GM12878 (cell line): ENCODE measurements at regions of chr1 and their contacts with region 1.

Region 1: GRCh38 chr1:180515864-180516388 is 13.5 kb upstream of the ACBD6 start:
- DNase-seq: peak; percentile 49
- ATAC-seq: peak; percentile 99
- H3K4me3 ChIP-seq: no peak overlapping the region
- H3K27ac ChIP-seq: peak overlapping the region; percentile 40; the same call in 1 of the 2 replicates
- H3K4me1 ChIP-seq: peaks cover 3% of the 10 kb centered on the region; the same call in 1 of the 2 replicates
- H3K27me3 ChIP-seq: no peaks in the 10 kb centered on the region
- CTCF ChIP-seq: peak; percentile 72 to 88 (median 76)
- EP300 ChIP-seq: no peak
- POLR2A ChIP-seq: no peak
- RAD21 ChIP-seq: peak; percentile 92

Region 2: DNA sequence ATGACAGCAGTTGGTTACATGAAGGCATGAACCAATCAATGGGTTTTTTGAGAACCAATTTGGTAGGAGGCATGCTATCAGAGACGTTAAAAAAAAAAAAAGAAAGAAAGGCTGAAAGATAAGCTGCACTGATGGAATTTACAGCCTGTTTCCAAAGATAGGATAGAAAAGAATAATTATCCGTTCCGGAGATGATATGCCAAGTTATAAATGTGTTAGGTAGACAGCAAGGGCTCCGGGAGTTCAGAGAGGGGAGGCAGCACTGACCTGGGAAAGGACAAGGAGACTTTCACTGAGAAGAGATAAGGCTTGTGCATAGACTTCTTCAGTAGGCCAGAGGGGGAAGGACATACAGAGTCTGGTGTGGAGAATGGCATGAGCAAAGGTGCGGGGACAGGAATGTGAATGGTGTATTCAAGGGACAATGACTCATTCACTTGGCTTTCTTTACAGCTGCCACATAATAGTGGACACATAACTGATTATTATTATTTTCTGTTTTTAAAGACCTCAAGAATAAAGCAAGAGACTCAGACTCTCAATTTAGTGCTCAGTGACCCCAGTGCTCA is 11.3 kb after region 1 on chr1:
- CTCF ChIA-PET with region 1: interaction called, 26 read pairs
- POLR2A ChIA-PET with region 1: no interaction called
- RAD21 ChIA-PET with region 1: interaction called, 12 read pairs
- SMC1A ChIA-PET with region 1: interaction called, 9 read pairs
- in situ Hi-C with region 1: no loop called
- intact Hi-C with region 1: no loop called
- DNase-seq: no peak
- ATAC-seq: no peak
- H3K4me3 ChIP-seq: no peak overlapping the region
- H3K27ac ChIP-seq: no peak overlapping the region
- H3K4me1 ChIP-seq: no peaks in the 10 kb centered on the region
- H3K27me3 ChIP-seq: peaks cover 0 to 2% of the 10 kb centered on the region in 2 experiments; a peak in 1 of 4 replicates
- CTCF ChIP-seq: no peak
- EP300 ChIP-seq: no peak
- POLR2A ChIP-seq: no peak
- RAD21 ChIP-seq: no peak

Region 3: DNA sequence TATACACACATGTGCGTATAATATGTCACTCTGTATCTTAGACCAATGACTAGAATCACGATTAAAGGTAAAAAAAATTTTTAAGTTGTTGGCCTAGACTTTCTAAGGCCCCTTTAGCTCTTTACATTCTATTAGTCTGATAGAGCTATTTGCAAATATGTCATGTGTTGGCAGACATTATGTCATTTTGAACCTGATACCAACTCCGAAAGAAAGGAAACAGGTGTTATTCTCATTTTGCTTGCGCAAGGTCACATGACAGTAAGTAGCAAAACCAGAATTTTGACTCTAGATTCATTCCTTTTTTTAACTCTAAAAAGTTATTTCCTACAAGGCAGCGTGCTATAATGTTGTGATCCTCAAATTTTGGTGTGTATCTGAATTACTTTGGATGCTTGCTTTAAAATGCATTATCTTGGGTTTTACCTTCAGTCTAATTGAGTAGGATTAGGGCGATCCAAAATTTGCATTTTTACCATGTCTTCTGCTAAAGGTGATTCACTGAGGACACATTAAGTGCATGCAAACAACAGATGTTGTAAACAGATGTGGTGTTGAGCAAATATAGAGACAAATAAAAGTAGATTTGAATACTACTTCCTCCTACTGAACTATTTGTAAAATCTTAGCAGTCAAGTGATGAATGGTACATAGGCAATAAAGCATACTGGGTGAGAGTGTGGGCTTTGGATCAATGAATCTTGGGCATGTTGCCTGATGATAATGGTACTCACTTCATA is 333.3 kb after region 1 on chr1:
- CTCF ChIA-PET with region 1: interaction called, 7 read pairs
- POLR2A ChIA-PET with region 1: no interaction called
- RAD21 ChIA-PET with region 1: interaction called, 4 read pairs
- SMC1A ChIA-PET with region 1: interaction called, 12 read pairs
- in situ Hi-C with region 1: no loop called
- intact Hi-C with region 1: no loop called
- DNase-seq: no peak
- ATAC-seq: peak; percentile 66
- H3K4me3 ChIP-seq: no peak overlapping the region
- H3K27ac ChIP-seq: no peak overlapping the region
- H3K4me1 ChIP-seq: peaks cover 22% of the 10 kb centered on the region
- H3K27me3 ChIP-seq: no peaks in the 10 kb centered on the region
- CTCF ChIP-seq: no peak
- EP300 ChIP-seq: no peak
- POLR2A ChIP-seq: no peak
- RAD21 ChIP-seq: no peak

Region 4: GRCh38 chr1:181152892-181153633 is 637.1 kb after region 1 on chr1:
- CTCF ChIA-PET with region 1: interaction called, 4 read pairs
- POLR2A ChIA-PET with region 1: no interaction called
- RAD21 ChIA-PET with region 1: interaction called, 4 read pairs
- SMC1A ChIA-PET with region 1: interaction called, 4 read pairs
- in situ Hi-C with region 1: loop called (anchors 5 kb)
- intact Hi-C with region 1: no loop called
- DNase-seq: no peak
- ATAC-seq: peak; percentile 88
- H3K4me3 ChIP-seq: no peak overlapping the region
- H3K27ac ChIP-seq: peak overlapping the region; percentile 62
- H3K4me1 ChIP-seq: peaks cover 48% of the 10 kb centered on the region
- H3K27me3 ChIP-seq: no peaks in the 10 kb centered on the region
- CTCF ChIP-seq: peak; percentile 19 to 40 (median 40); a peak in 4 of 6 replicates
- EP300 ChIP-seq: peak; percentile 57 to 68; a peak in 2 of 4 replicates
- POLR2A ChIP-seq: peak; percentile 61
- RAD21 ChIP-seq: peak; percentile 41; the same call in 1 of the 2 replicates